CD4-positive, alpha-beta memory T cell (primary cell): ENCODE measurements at regions of chr22 and their contacts with region 1.

Region 1: GRCh38 chr22:29883045-29883774 is at the start of gene MTMR3:
- DNase-seq: peak; percentile 82 to 91 (median 86)
- H3K4me3 ChIP-seq: peak within 1 kb of the TSS; percentile 45 to 83
- H3K4me3 Mint-ChIP-seq: peak within 1 kb of the TSS; percentile 85 to 93 (median 91)
- H3K27ac ChIP-seq: peak within 1 kb of the TSS; percentile 82
- H3K27ac Mint-ChIP-seq: peak within 1 kb of the TSS; percentile 73 to 93 (median 89)
- H3K4me1 ChIP-seq: peaks cover 39% of the 10 kb centered on the region
- H3K4me1 Mint-ChIP-seq: peaks cover under 1 to 14% (median 8%) of the 10 kb centered on the region in 4 donors
- H3K27me3 ChIP-seq: no peaks in the 10 kb centered on the region
- H3K27me3 Mint-ChIP-seq: no peaks in the 10 kb centered on the region
- total RNA-seq, gene MTMR3: 65.3 to 68.6 TPM

Region 2: GRCh38 chr22:29766632-29767170 is 116.5 kb before region 1 on chr22 and contains the start of gene ZMAT5:
- CTCF ChIA-PET with region 1: no interaction called
- POLR2A ChIA-PET with region 1: interaction called, 5 read pairs
- intact Hi-C with region 1: loop called (anchors 1 kb)
- DNase-seq: peak; percentile 93 to 96 (median 95)
- H3K4me3 ChIP-seq: peak within 1 kb of the TSS; percentile 96 to 100
- H3K4me3 Mint-ChIP-seq: peak within 1 kb of the TSS; percentile 95 to 100 (median 99)
- H3K27ac ChIP-seq: peak within 1 kb of the TSS; percentile 87
- H3K27ac Mint-ChIP-seq: peak within 1 kb of the TSS; percentile 38 to 99 (median 99)
- H3K4me1 ChIP-seq: peaks cover 29% of the 10 kb centered on the region
- H3K4me1 Mint-ChIP-seq: peaks cover 22 to 53% (median 28%) of the 10 kb centered on the region in 4 donors
- H3K27me3 ChIP-seq: no peaks in the 10 kb centered on the region
- H3K27me3 Mint-ChIP-seq: no peaks in the 10 kb centered on the region
- total RNA-seq, gene ZMAT5: 16.3 to 20.4 TPM

Region 3: DNA sequence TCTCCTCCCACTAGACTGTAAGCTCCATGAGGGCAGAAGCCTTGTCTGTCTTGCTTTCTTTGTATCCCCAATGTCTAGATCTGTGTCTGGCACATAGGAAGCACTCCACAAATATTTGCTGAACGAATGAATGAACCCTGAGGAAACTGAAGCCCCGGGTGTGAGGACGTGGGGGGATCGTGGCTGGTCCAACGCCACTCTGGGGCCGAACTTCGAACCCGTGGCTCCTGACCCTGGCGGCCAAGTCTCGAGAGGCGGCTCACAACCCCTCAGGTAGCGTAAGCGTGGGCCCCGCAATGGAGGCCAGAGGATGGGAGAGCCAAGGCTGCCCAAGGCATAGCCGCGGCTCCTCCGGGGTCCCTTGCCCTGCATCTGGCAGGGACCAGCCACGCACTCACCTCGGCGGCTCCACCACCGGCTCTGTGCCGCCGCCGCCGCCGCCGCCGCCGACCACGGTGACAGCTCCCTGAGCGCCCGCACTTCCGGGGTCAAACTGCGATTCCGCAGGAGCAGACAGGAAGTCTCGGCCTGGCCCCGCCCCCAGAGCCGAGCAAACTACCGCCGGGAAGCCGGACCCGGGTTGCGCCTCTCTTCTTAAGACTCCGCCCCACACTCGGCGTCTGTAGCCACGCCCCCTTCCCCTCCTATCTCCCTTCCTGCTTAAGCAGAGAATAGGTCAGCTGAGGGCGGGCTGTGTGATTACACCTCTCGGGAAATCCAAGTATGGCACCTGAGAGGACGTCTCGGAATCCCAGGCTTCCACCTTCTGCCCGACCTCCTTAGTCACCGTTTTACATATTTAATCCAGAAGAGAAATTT is 45.2 kb before region 1 on chr22 and contains the start of gene ASCC2:
- CTCF ChIA-PET with region 1: interaction called, 3 read pairs
- POLR2A ChIA-PET with region 1: interaction called, 20 read pairs
- intact Hi-C with region 1: loop called (anchors 1 kb)
- DNase-seq: peak; percentile 96 to 99 (median 98)
- H3K4me3 ChIP-seq: peak within 1 kb of the TSS; percentile 80 to 89
- H3K4me3 Mint-ChIP-seq: peak within 1 kb of the TSS; percentile 93 to 99 (median 97)
- H3K27ac ChIP-seq: peak within 1 kb of the TSS; percentile 72
- H3K27ac Mint-ChIP-seq: peak within 1 kb of the TSS; percentile 94 to 99 (median 98)
- H3K4me1 ChIP-seq: peaks cover 32% of the 10 kb centered on the region
- H3K4me1 Mint-ChIP-seq: peaks cover 29 to 48% (median 35%) of the 10 kb centered on the region in 4 donors
- H3K27me3 ChIP-seq: no peaks in the 10 kb centered on the region
- H3K27me3 Mint-ChIP-seq: no peaks in the 10 kb centered on the region
- total RNA-seq, gene ASCC2: 82.3 to 88.7 TPM

Region 4: GRCh38 chr22:29860006-29860766 is 23.0 kb before region 1 on chr22:
- CTCF ChIA-PET with region 1: no interaction called
- POLR2A ChIA-PET with region 1: no interaction called
- intact Hi-C with region 1: no loop called
- DNase-seq: no peak
- H3K4me3 ChIP-seq: no peak overlapping the region
- H3K4me3 Mint-ChIP-seq: no peak overlapping the region
- H3K27ac ChIP-seq: no peak overlapping the region
- H3K27ac Mint-ChIP-seq: no peak overlapping the region
- H3K4me1 ChIP-seq: no peaks in the 10 kb centered on the region
- H3K4me1 Mint-ChIP-seq: no peaks in the 10 kb centered on the region
- H3K27me3 ChIP-seq: no peaks in the 10 kb centered on the region
- H3K27me3 Mint-ChIP-seq: peaks cover 3% of the 10 kb centered on the region in 2 donors

Region 5: GRCh38 chr22:29979777-29980321 is 96.6 kb after region 1 on chr22:
- CTCF ChIA-PET with region 1: no interaction called
- POLR2A ChIA-PET with region 1: no interaction called
- intact Hi-C with region 1: loop called (anchors 10 kb)
- DNase-seq: no peak
- H3K4me3 ChIP-seq: no peak overlapping the region
- H3K4me3 Mint-ChIP-seq: no peak overlapping the region
- H3K27ac ChIP-seq: no peak overlapping the region
- H3K27ac Mint-ChIP-seq: peak overlapping the region in 1 of 7 donors; percentile 19
- H3K4me1 ChIP-seq: no peaks in the 10 kb centered on the region
- H3K4me1 Mint-ChIP-seq: peaks cover 0 to 4% (median 1%) of the 10 kb centered on the region in 4 donors
- H3K27me3 ChIP-seq: no peaks in the 10 kb centered on the region
- H3K27me3 Mint-ChIP-seq: no peaks in the 10 kb centered on the region